Calu3 (cell line): ENCODE measurements at regions of chr10 and their contacts with region 1.

Region 1: GRCh38 chr10:8053446-8054290 is 820 bp upstream of the GATA3 start:
- DNase-seq: peak; percentile 95
- H3K4me3 Mint-ChIP-seq: peak overlapping the region; percentile 89
- H3K27ac Mint-ChIP-seq: peak overlapping the region; percentile 86
- H3K4me1 Mint-ChIP-seq: peaks cover 9% of the 10 kb centered on the region
- H3K27me3 Mint-ChIP-seq: peaks cover 20% of the 10 kb centered on the region
- CTCF ChIP-seq: peak; percentile 76

Region 2: GRCh38 chr10:7886025-7886424 is 167.6 kb before region 1 on chr10:
- CTCF ChIA-PET with region 1: no interaction called
- intact Hi-C with region 1: no loop called
- DNase-seq: peak; percentile 4
- H3K4me3 Mint-ChIP-seq: no peak overlapping the region
- H3K27ac Mint-ChIP-seq: no peak overlapping the region
- H3K4me1 Mint-ChIP-seq: peaks cover 29% of the 10 kb centered on the region
- H3K27me3 Mint-ChIP-seq: no peaks in the 10 kb centered on the region
- CTCF ChIP-seq: no peak

Region 3: DNA sequence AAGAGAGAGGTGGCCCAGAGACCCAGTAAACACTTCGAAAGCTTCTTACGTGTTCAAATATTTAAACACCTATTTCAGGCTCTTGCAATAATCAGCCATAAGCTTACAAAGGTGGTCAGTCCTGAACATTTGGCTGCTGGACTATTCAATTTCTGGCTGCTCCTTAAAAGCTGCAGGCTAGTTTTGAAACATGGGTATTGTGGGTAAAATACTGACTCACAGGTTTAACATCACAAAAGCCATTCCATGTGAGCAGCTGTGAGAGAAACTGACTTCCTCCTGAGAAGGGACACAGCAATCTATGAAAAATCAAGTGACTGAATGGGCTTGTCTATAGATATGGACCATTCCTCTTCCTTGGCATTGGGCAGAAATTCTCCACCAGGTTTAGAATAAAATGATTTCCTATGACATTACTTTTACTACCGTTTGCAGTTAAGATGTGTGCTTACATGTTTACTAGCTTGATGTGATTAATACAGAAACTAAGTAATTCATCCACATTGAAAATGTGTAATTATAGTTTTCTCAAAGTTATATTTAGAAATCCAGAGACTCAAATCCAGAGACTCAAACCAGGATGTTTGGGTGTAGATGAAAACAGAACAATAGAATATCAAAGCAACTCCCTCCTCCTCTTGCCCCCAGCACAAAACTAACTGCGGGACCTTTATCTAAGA is 253.2 kb after region 1 on chr10:
- CTCF ChIA-PET with region 1: no interaction called
- intact Hi-C with region 1: loop called (anchors 10 kb)
- DNase-seq: no peak
- H3K4me3 Mint-ChIP-seq: no peak overlapping the region
- H3K27ac Mint-ChIP-seq: no peak overlapping the region
- H3K4me1 Mint-ChIP-seq: peaks cover 8% of the 10 kb centered on the region
- H3K27me3 Mint-ChIP-seq: no peaks in the 10 kb centered on the region
- CTCF ChIP-seq: no peak

Region 4: DNA sequence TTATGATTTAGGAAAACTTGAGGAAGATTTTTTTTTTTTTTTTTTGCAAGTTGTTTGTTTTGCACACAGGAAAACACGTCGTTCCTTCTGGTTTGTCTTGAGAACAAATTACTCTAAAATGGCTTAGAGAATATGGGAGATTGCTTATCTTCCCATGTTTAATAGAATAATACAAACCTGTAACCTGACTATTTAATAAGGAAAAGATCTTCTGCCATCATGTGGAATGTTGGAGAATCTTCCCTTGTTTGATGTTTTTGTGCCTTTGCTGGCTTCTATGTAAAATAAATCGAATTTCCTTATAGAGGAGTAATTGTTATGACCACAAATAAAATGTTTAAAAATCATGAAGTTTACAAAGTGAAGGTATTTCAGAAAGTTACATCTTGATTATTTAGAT is 819.6 kb after region 1 on chr10:
- CTCF ChIA-PET with region 1: no interaction called
- intact Hi-C with region 1: loop called (anchors 1 kb)
- DNase-seq: no peak
- H3K4me3 Mint-ChIP-seq: no peak overlapping the region
- H3K27ac Mint-ChIP-seq: peak overlapping the region; percentile 21
- H3K4me1 Mint-ChIP-seq: peaks cover 11% of the 10 kb centered on the region
- H3K27me3 Mint-ChIP-seq: no peaks in the 10 kb centered on the region
- CTCF ChIP-seq: no peak